AG04449 (cell line): ENCODE measurements at regions of chrX and their contacts with region 1.

Region 1: DNA sequence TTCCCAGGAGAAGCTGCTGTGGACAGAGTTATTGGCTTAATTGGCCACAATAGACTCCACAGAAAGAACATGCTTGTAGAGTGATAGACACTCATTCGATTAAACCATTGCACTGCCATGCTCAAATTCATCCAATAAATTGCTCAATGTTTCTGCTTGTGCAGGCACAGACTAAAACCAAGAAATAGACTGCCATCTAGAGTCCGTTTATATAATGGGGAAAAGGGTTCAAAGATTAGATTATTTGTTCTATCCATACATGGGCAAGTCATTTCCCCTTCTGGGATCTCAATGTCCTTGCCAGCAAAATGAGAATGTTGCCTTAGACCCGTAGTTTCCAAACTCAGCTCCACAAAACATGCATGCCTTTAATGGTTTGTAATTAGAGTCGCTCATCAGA is 8.7 kb downstream of the SMIM10 start:
- DNase-seq: no peak
- H3K4me3 ChIP-seq: no peak overlapping the region
- CTCF ChIP-seq: no peak

Region 2: GRCh38 chrX:134963041-134963440 is 36.4 kb before region 1 on chrX:
- CTCF ChIA-PET with region 1: interaction called, 21 read pairs
- POLR2A ChIA-PET with region 1: interaction called, 3 read pairs
- DNase-seq: no peak
- H3K4me3 ChIP-seq: no peak overlapping the region
- CTCF ChIP-seq: no peak

Region 3: GRCh38 chrX:134969726-134970125 is 29.7 kb before region 1 on chrX:
- CTCF ChIA-PET with region 1: interaction called, 21 read pairs
- POLR2A ChIA-PET with region 1: no interaction called
- DNase-seq: no peak
- H3K4me3 ChIP-seq: no peak overlapping the region
- CTCF ChIP-seq: no peak

Region 4: DNA sequence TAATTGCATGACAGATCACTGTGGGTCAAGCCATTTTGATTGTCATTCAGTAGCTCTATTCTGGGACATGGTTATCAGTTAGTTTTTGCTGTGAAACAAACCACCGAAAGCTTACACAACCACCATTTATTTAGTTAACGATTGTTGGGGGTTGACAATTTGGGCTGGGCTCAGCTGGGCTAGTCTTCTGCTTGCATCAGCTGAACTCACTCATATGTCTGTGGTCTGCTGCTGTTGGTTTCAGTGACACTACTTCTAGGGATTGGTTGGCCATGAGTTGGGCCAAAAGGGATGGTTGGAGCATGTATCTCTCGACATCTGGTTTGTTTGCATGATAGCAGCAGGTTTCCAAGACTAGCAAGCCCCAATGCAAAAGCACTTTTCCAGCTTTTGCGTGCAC is 14.0 kb before region 1 on chrX:
- CTCF ChIA-PET with region 1: interaction called, 10 read pairs
- POLR2A ChIA-PET with region 1: no interaction called
- DNase-seq: no peak
- H3K4me3 ChIP-seq: no peak overlapping the region
- CTCF ChIP-seq: no peak

Region 5: DNA sequence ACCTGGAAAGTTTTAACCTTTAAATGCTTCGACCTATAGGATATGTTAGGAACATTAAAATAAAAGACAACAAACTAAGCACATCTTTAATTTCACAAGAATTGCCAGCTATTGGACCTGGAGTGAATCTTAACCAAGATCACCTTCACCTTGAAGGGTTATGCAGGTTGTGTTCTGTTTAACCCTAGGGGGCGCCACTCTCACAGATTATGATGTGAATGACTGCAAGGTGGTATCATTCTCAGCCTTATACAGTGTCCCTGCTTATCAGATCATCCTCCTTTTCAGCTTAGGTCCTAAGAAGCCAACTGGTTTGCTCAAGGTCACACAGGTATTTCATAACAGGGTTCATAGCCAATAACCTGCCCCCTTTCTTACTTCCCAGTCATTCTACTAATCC is 544.5 kb after region 1 on chrX:
- CTCF ChIA-PET with region 1: no interaction called
- POLR2A ChIA-PET with region 1: no interaction called
- DNase-seq: no peak
- H3K4me3 ChIP-seq: no peak overlapping the region
- CTCF ChIP-seq: no peak